ENCODE measurements at regions of chr10 and their contacts with region 1.

Region 1: GRCh38 chr10:97292097-97292862 is at the start of gene ARHGAP19:
- DNase-seq: peak; percentile 97
- H3K4me3 Mint-ChIP-seq: peak within 1 kb of the TSS; percentile 85
- H3K27ac Mint-ChIP-seq: peak within 1 kb of the TSS; percentile 83
- H3K4me1 Mint-ChIP-seq: peaks cover 32% of the 10 kb centered on the region
- H3K27me3 Mint-ChIP-seq: peaks cover 3% of the 10 kb centered on the region
- total RNA-seq, gene ARHGAP19: 47.0 to 54.4 TPM

Region 2: GRCh38 chr10:97278491-97278989 is 13.7 kb before region 1 on chr10:
- CTCF ChIA-PET with region 1: interaction called, 13 read pairs
- POLR2A ChIA-PET with region 1: interaction called, 8 read pairs
- DNase-seq: no peak
- H3K4me3 Mint-ChIP-seq: no peak overlapping the region
- H3K27ac Mint-ChIP-seq: no peak overlapping the region
- H3K4me1 Mint-ChIP-seq: peaks cover 14% of the 10 kb centered on the region
- H3K27me3 Mint-ChIP-seq: no peaks in the 10 kb centered on the region

Region 3: GRCh38 chr10:97318772-97319651 is 26.7 kb after region 1 on chr10 and contains the start of gene FRAT1:
- CTCF ChIA-PET with region 1: interaction called, 4 read pairs
- POLR2A ChIA-PET with region 1: interaction called, 14 read pairs
- DNase-seq: peak; percentile 88
- H3K4me3 Mint-ChIP-seq: peak within 1 kb of the TSS; percentile 80
- H3K27ac Mint-ChIP-seq: peak within 1 kb of the TSS; percentile 93
- H3K4me1 Mint-ChIP-seq: peaks cover 25% of the 10 kb centered on the region
- H3K27me3 Mint-ChIP-seq: peaks cover 4% of the 10 kb centered on the region
- total RNA-seq, gene FRAT1: 6.9 to 7.6 TPM

Region 4: DNA sequence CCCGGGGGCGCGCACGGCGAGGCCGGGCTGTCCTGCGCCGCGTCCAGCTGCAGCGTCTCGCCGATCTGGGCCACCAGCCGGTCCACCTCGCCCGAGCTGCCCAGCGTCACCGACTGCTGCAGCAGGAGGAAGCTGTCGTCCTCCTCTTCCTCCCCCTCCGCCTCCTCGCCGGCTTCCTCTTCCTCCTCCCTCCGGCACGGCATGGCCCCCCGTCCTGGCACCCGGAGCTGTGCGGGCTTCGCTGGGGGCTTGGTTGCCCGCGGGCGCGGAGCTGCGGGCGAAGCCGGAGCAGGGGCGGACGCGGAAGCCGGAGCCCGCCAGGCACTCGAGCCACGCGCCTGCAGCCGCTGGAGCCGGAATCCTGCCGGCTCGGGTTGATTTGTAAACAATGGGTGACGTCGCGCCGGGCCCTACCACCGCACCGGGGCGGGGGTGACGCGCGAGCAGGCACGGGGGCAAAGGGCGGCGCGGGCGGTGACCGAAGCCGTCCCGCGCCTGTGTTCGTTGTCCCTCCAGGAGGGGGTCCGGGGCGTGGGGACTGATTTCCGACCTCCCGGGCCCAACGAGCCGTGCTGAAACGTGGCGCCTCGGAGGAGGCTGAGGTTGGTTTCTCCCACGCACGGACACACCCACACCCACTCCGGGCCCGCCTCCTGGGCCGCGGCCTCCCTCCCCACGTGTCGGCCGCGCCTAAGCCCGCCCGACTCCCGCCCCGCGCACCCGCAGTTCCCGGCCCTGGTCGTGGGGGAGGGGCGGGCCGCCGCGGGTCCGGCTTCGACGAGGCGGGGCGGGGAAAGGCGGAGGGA is 42.3 kb after region 1 on chr10 and contains the start of gene FRAT2:
- CTCF ChIA-PET with region 1: no interaction called
- POLR2A ChIA-PET with region 1: interaction called, 21 read pairs
- DNase-seq: peak; percentile 87
- H3K4me3 Mint-ChIP-seq: peak within 1 kb of the TSS; percentile 84
- H3K27ac Mint-ChIP-seq: peak within 1 kb of the TSS; percentile 79
- H3K4me1 Mint-ChIP-seq: peaks cover 35% of the 10 kb centered on the region
- H3K27me3 Mint-ChIP-seq: peaks cover 23% of the 10 kb centered on the region
- total RNA-seq, gene FRAT2: 11.1 to 11.5 TPM

Measured in activated CD4-positive, alpha-beta memory T cell treated with anti-CD3 and anti-CD28 coated beads, Interleukin-2, amount 10 ng/mL, durations not matched to agents 7 days and 5 days (primary cell).